GM10248 (cell line): ENCODE measurements at regions of chr9 and their contacts with region 1.

Region 1: GRCh38 chr9:36407122-36407723 is 7.2 kb upstream of the RNF38 start:
- DNase-seq: peak; percentile 55
- CTCF ChIP-seq: peak; percentile 92

Region 2: DNA sequence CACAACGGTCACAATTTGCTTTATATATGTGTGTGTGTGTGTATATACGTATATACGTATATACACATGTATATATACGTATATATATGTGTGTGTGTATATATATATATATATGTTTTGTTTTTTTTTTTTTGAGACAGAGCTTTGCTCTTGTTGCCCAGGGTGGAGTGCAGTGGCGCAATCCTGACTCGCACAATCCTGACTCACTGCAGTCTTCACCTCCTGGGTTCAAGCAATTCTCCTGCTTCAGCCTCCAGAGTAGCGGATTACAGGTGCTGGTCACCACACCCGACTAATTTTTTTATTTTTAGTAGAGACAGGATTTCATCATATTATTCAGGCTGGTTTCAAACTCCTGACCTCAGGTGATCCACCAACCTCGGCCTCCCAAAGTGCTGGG is 10.2 kb before region 1 on chr9:
- CTCF ChIA-PET with region 1: interaction called, 16 read pairs
- POLR2A ChIA-PET with region 1: no interaction called
- DNase-seq: no peak
- CTCF ChIP-seq: no peak

Region 3: DNA sequence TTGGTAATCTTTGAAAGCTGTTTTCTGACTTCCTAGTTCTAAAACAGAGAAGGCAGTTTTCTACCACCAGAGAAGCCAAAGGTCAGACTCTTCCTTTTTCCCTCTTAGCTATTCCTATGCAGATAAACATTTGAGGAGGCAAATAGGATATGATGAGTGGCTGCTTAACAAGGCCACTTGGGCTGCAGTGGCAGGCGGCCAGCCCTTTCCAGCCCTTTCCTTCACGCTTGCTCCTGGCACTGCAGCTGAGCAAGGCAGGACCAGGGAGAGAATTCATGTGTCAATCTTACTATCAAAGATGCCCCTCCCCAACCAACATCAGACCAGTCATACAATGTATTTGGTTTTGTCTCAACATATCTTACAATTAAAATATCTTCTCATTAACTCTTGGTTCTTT is 29.7 kb after region 1 on chr9:
- CTCF ChIA-PET with region 1: interaction called, 40 read pairs
- POLR2A ChIA-PET with region 1: no interaction called
- DNase-seq: no peak
- CTCF ChIP-seq: no peak

Region 4: DNA sequence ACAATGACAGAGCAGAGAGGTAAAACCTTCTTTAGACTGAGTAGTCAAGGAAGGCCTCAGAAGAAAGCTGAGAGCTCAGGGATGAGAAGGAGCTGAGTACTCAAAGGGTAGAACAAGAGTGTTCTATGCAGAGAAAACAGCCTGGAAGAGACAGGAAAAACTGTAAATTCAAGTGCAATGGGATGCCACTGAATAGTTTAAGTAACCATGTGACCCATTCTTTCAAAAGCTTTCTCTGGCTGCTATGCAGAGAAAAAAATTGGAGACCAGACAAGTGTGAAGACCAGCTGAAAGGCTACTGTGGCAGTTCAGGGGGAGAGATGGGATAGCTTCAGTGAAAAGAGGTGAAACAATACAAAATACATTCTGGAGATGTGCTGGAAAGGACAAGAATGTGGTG is 54.1 kb after region 1 on chr9:
- CTCF ChIA-PET with region 1: interaction called, 42 read pairs
- POLR2A ChIA-PET with region 1: no interaction called
- DNase-seq: no peak
- CTCF ChIP-seq: no peak

Region 5: DNA sequence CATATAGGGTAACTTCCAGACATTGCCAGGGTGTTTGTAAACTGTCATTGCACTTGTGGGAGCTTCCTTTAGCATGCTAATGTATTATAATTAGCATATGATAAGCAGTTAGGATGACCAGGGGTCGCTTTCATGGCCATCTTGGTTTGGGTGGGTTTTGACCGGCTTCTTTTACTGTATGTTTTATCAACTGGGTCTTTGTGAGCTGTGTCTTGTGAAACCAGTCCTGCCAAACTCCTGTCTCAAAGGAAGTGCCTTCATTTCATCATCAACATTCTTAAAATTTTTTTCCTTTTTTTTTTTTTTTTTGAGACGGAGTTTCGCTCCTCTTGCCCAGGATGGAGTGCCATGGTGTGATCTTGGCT is 153.6 kb after region 1 on chr9:
- CTCF ChIA-PET with region 1: interaction called, 356 read pairs
- POLR2A ChIA-PET with region 1: no interaction called
- DNase-seq: no peak
- CTCF ChIP-seq: no peak

Region 6: DNA sequence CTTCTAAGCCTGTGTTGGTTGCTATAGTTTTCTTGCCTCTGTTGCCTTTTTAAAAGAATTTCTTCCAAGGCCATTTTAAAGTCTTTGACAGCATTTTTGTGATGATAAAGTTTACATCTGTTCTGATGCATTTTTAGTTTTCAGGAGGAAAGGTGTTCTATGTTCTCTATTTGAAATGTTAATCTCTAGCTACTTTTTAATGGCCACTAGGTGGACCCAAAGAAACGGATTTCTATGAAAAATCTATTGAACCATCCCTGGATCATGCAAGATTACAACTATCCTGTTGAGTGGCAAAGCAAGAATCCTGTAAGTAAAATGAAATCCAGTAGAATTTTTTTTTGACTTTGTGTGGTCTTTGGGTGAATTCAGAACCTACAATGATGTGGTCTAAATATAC is 225.7 kb after region 1 on chr9:
- CTCF ChIA-PET with region 1: interaction called, 12 read pairs
- POLR2A ChIA-PET with region 1: no interaction called
- DNase-seq: peak; percentile 32
- CTCF ChIP-seq: peak; percentile 51